ENCODE measurements at regions of chr6 and their contacts with region 1.

Region 1: GRCh38 chr6:11381801-11382513 is 149.5 kb upstream of the NEDD9 start:
- DNase-seq: peak; percentile 82
- H3K4me3 Mint-ChIP-seq: peak overlapping the region; percentile 94
- H3K27ac Mint-ChIP-seq: peak overlapping the region; percentile 92
- H3K4me1 Mint-ChIP-seq: peaks cover 67% of the 10 kb centered on the region
- H3K27me3 Mint-ChIP-seq: no peaks in the 10 kb centered on the region

Region 2: DNA sequence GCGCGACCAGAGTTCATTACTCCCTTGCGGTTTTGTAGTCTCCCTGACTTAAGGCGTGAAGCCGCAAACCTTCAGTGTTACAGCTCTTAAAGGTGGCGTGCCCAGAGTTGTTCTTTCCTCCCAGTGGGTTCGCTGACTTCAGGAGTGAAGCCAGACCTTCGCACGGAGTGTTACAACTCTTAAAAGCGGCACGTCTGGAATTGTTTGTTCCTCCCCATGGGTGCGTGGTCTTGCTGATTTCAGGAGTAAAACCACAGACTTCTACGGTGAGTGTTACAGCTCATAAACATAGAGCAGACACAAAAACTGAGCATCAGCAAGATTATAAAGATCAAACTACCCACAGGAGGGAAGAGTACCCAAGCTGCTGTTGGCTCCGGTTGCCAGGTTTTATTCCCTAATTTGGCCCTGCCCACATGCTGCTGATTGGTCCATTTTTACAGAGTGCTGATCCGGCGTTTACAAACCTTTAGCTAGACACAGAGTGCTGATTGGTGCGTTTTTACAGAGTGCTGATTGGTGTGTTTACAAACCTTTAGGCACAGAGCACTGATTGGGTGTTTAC is 648.7 kb before region 1 on chr6:
- CTCF ChIA-PET with region 1: no interaction called
- POLR2A ChIA-PET with region 1: no interaction called
- DNase-seq: no peak
- H3K4me3 Mint-ChIP-seq: no peak overlapping the region
- H3K27ac Mint-ChIP-seq: no peak overlapping the region
- H3K4me1 Mint-ChIP-seq: no peaks in the 10 kb centered on the region
- H3K27me3 Mint-ChIP-seq: no peaks in the 10 kb centered on the region

Region 3: GRCh38 chr6:10962673-10963072 is 419.3 kb before region 1 on chr6:
- CTCF ChIA-PET with region 1: no interaction called
- POLR2A ChIA-PET with region 1: no interaction called
- DNase-seq: no peak
- H3K4me3 Mint-ChIP-seq: no peak overlapping the region
- H3K27ac Mint-ChIP-seq: no peak overlapping the region
- H3K4me1 Mint-ChIP-seq: no peaks in the 10 kb centered on the region
- H3K27me3 Mint-ChIP-seq: peaks cover 20% of the 10 kb centered on the region

Region 4: GRCh38 chr6:11149551-11149950 is 232.4 kb before region 1 on chr6:
- CTCF ChIA-PET with region 1: no interaction called
- POLR2A ChIA-PET with region 1: no interaction called
- DNase-seq: no peak
- H3K4me3 Mint-ChIP-seq: no peak overlapping the region
- H3K27ac Mint-ChIP-seq: no peak overlapping the region
- H3K4me1 Mint-ChIP-seq: peaks cover 8% of the 10 kb centered on the region
- H3K27me3 Mint-ChIP-seq: peaks cover 5% of the 10 kb centered on the region

Region 5: GRCh38 chr6:11179419-11180202 is 202.3 kb before region 1 on chr6:
- CTCF ChIA-PET with region 1: no interaction called
- POLR2A ChIA-PET with region 1: no interaction called
- DNase-seq: no peak
- H3K4me3 Mint-ChIP-seq: no peak overlapping the region
- H3K27ac Mint-ChIP-seq: no peak overlapping the region
- H3K4me1 Mint-ChIP-seq: no peaks in the 10 kb centered on the region
- H3K27me3 Mint-ChIP-seq: no peaks in the 10 kb centered on the region

Region 6: GRCh38 chr6:11232193-11232769 is 149.7 kb before region 1 on chr6 and contains the start of gene NEDD9:
- CTCF ChIA-PET with region 1: interaction called, 3 read pairs
- POLR2A ChIA-PET with region 1: interaction called, 68 read pairs
- DNase-seq: peak; percentile 97
- H3K4me3 Mint-ChIP-seq: peak within 1 kb of the TSS; percentile 86
- H3K27ac Mint-ChIP-seq: peak within 1 kb of the TSS; percentile 99
- H3K4me1 Mint-ChIP-seq: peaks cover 70% of the 10 kb centered on the region
- H3K27me3 Mint-ChIP-seq: no peaks in the 10 kb centered on the region
- total RNA-seq, gene NEDD9: 60.1 to 64.8 TPM

Region 7: GRCh38 chr6:11277275-11278206 is 104.4 kb before region 1 on chr6:
- CTCF ChIA-PET with region 1: no interaction called
- POLR2A ChIA-PET with region 1: interaction called, 13 read pairs
- DNase-seq: no peak
- H3K4me3 Mint-ChIP-seq: peak overlapping the region; percentile 12
- H3K27ac Mint-ChIP-seq: peak overlapping the region; percentile 75
- H3K4me1 Mint-ChIP-seq: peaks cover 43% of the 10 kb centered on the region
- H3K27me3 Mint-ChIP-seq: no peaks in the 10 kb centered on the region

Region 8: DNA sequence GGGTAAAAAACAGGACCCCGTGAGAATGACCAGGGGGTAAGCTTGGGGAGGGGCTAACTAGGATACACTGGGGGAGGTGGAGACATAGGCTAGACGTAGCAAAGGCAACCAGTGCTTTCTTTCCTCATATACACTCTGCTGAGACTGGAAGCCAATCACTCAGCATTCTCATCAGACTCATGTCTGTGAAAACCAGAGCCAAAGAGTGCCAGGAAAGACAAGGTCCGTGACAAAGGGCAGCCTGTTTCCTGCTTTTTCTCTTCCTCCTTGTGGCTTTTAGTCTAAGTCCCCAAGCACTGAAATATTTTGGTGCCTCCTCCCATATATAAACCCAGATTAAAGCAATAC is 51.6 kb before region 1 on chr6:
- CTCF ChIA-PET with region 1: no interaction called
- POLR2A ChIA-PET with region 1: interaction called, 11 read pairs
- DNase-seq: no peak
- H3K4me3 Mint-ChIP-seq: no peak overlapping the region
- H3K27ac Mint-ChIP-seq: no peak overlapping the region
- H3K4me1 Mint-ChIP-seq: peaks cover 41% of the 10 kb centered on the region
- H3K27me3 Mint-ChIP-seq: no peaks in the 10 kb centered on the region

Region 9: GRCh38 chr6:11366183-11366933 is 15.6 kb before region 1 on chr6:
- CTCF ChIA-PET with region 1: interaction called, 22 read pairs
- POLR2A ChIA-PET with region 1: interaction called, 102 read pairs
- DNase-seq: peak; percentile 64
- H3K4me3 Mint-ChIP-seq: peak overlapping the region; percentile 12
- H3K27ac Mint-ChIP-seq: peak overlapping the region; percentile 62
- H3K4me1 Mint-ChIP-seq: peaks cover 74% of the 10 kb centered on the region
- H3K27me3 Mint-ChIP-seq: no peaks in the 10 kb centered on the region